ENCODE measurements at regions of chr7 and their contacts with region 1.

Region 1: GRCh38 chr7:12524794-12525386 is 45.6 kb upstream of the SCIN start:
- DNase-seq: no peak

Region 2: DNA sequence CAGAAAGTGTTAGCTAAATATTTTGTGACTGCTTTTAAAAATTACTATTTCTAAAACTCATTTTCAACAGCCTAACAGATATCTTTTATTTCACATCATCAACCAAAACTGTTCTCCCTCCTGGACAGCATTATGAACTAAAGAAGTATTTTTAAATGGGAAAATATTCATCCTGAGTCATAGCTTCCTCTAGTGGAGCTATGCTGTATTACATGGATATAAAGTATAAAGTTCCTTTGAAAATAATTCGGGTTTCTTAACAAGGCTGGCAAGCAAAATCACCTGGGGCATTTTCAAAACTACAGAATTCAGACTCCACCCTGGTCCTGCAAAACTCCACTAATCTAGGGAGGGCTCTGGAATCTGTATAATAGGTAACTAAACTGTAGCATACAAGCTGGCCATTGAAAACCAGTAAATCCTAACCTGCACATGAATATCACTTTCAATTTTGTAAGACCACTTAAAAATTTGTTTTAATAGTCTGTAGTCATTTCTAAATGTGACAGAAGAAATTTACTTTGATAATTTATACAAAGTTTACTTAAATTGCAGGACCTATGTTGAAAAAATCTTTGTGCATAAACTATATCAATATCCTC is 99.1 kb after region 1 on chr7:
- intact Hi-C with region 1: loop called (anchors 10 kb)
- DNase-seq: no peak

Region 3: DNA sequence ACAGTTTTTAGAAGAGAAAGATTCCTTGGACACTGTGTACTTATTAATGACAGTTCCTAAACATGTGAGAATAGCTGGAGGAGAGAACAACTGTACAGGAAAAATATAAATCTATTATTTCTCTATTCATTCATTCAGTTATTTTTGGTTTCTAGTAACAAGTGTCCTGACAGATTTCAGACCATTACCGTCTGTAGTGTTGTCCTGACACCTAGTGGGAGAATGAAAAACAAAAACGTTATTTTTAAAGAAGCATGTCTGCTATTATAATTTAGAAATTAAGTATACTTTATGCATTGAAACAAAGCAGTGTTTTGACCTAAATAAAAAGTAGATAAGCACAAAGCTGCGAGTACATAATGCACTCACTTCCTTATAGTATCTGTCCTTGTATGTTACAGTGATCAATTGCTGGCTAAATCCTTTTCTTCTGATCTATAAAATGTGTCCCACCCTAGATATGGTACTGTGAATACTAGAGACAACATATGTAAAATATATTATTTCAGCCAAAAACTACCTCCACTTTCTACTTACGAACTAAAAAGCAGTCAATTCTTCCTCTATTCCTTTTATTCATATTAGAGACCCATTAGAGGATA is 738.1 kb after region 1 on chr7:
- intact Hi-C with region 1: loop called (anchors 5 kb)
- DNase-seq: no peak

Measured in cardiac septum (tissue), 1 donor.